Lower lobe of right lung (tissue), 2 donors: ENCODE measurements at regions of chr16 and their contacts with region 1.

Region 1: GRCh38 chr16:22001591-22001990 is 675 bp upstream of the PDZD9 start:
- DNase-seq: no peak
- ATAC-seq: no peak
- H3K4me3 ChIP-seq: no peak overlapping the region
- H3K27ac ChIP-seq: no peak overlapping the region
- H3K4me1 ChIP-seq: peaks cover 7% of the 10 kb centered on the region
- H3K27me3 ChIP-seq: no peaks in the 10 kb centered on the region
- CTCF ChIP-seq: no peak

Region 2: GRCh38 chr16:22035153-22035552 is 33.6 kb after region 1 on chr16:
- intact Hi-C with region 1: no loop called
- DNase-seq: no peak
- ATAC-seq: peak; percentile 11 to 55
- H3K4me3 ChIP-seq: no peak overlapping the region
- H3K27ac ChIP-seq: no peak overlapping the region
- H3K4me1 ChIP-seq: peaks cover 4% of the 10 kb centered on the region
- H3K27me3 ChIP-seq: no peaks in the 10 kb centered on the region
- CTCF ChIP-seq: no peak

Region 3: DNA sequence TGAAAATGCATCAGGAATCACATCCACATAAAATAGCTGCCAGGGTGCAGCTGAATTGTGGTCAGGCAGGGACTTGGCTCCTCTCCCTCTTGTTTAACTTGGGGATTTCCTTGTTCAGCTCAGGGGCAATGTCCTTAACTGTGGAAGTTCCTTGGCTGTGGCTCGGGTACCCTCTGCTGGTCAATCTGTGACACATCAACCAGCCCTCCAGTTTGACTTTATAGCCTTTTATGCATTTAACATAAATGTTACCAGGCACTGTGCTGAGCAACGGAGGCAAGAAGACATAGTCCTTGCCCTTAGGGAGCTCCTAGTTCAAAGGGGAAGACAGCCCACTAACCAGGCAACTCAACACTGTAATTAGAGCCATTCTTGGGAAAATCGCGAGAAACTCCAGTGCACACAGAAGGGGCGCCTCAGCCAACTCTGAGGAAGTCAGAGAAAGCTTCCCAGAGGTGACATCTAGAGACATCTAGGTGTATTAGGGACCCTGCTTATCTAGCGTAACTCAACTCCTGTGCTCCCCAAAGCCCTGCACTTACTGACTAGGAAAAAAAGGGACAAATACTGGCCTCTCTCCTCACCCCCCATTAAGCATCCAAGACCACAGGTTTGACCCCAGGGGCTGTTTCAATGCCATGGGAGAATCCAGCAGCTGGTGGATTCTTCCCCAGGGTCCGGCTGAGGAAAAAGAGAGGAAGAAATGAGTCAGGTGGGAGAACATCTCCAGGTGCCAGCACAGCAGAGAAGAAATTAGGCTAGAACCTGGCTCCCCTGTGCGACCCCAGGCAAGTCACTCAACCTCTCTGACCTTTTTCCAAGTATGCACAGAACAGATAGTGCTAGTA is 187.2 kb after region 1 on chr16:
- intact Hi-C with region 1: loop called (anchors 5 kb)
- DNase-seq: peak; percentile 65
- ATAC-seq: no peak
- H3K4me3 ChIP-seq: peak overlapping the region; percentile 78
- H3K27ac ChIP-seq: peak overlapping the region; percentile 93
- H3K4me1 ChIP-seq: peaks cover 41% of the 10 kb centered on the region
- H3K27me3 ChIP-seq: no peaks in the 10 kb centered on the region
- CTCF ChIP-seq: peak; percentile 84